ENCODE measurements at regions of chr11 and their contacts with region 1.

Region 1: DNA sequence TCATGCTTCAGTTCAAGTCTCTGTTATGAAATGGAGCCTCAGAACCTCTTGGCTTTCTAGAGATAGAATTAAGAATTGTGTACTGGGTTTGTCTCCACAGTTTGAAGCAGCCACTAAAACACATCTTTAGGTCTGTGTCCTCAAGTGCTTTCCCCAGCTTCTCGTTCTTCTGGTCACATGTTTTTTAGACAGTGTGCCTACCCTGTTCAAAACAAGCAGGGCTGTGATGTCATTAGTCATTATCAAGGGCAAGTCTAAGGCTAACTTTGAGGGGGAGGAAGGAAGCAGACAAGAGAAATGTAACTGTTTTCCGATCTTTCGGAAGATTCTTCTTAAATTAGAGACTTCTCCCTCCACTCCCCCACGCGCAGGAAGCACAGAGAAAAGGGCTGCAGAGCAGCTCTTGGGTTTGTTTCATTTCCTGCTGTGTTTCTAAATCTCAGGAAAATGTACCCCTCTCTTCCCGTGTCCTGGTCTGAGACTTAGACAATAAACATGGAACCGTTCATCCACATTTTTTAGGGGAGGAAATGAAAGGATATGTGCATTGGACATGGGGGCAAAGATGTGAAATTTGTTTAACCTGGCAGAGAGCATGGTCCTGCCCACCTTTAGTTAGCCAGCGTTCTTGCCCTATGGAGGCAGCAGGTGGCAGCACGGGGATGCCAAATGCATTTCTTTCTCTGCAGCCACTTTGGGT is 3.1 kb downstream of the AKIP1 start:
- DNase-seq: peak; percentile 66
- H3K4me3 Mint-ChIP-seq: peak overlapping the region; percentile 56
- H3K27ac Mint-ChIP-seq: peak overlapping the region; percentile 90
- H3K4me1 Mint-ChIP-seq: peaks cover 51% of the 10 kb centered on the region
- H3K27me3 Mint-ChIP-seq: peaks cover 13% of the 10 kb centered on the region

Region 2: DNA sequence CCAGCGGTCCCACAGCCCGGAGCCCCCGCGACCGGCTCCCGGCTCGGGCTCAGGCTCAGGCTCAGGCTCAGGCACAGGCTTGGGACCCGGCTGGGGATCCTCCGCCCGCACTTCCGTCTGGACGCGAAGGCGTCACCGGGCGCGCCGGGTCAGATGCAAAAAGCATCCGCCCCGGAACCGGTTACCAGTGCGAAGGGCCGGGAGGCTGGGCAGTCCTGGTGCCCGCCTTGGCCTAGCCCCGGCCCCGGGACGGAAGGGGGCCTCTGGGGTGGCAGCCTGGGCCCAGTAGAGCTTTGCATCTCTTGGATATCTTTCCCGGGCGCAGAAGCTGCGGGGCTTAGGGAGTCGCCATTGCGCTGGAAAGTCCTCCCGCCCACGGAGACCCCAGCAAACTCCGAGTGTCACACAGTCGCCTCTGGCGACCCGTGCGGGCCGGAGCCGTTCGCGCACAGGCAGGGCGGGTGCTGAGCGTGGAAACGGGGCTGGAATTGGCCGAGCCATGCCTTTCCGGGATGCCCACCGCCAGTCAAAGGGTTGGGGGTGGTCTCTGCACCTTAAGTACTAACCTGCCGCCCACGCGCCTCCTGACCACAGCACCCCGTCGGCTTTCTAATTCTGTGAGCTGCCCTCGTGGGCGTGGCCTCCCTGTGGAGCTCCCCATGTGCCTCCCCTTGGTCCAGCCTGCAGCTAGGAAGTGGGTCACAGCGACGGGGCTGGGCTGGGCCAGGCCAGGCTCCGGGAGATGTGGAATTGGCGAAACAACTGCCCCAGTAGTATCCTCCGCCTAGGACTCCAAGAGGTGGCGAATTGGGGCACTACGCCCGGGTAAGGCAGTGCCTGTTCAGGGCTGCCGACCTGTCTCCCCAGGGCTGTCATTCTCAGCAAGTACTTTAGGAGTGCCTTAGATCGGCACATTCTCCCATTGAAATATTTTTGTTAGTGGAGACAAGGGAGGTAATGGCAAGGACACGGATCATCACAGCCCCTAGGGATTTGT is 50.5 kb after region 1 on chr11 and contains the start of gene TMEM9B:
- CTCF ChIA-PET with region 1: interaction called, 65 read pairs
- DNase-seq: peak; percentile 88
- H3K4me3 Mint-ChIP-seq: peak within 1 kb of the TSS; percentile 97
- H3K27ac Mint-ChIP-seq: peak within 1 kb of the TSS; percentile 95
- H3K4me1 Mint-ChIP-seq: peaks cover 36% of the 10 kb centered on the region
- H3K27me3 Mint-ChIP-seq: no peaks in the 10 kb centered on the region

Measured in activated naive CD4-positive, alpha-beta T cell treated with anti-CD3 and anti-CD28 coated beads, Interleukin-2, amount 10 ng/mL, durations not matched to agents 7 days and 5 days (primary cell).